ENCODE measurements at regions of chr5 and their contacts with region 1.

Region 1: GRCh38 chr5:110738812-110739651 is at the start of gene SLC25A46:
- DNase-seq: peak; percentile 41
- H3K4me3 ChIP-seq: peak within 1 kb of the TSS; percentile 82
- H3K27ac ChIP-seq: peak within 1 kb of the TSS; percentile 77
- H3K27me3 ChIP-seq: no peaks in the 10 kb centered on the region
- CTCF ChIP-seq: no peak
- polyA plus RNA-seq, gene SLC25A46: 45.2 and 60.3 TPM in 2 replicates

Region 2: GRCh38 chr5:110561510-110561909 is 177.5 kb before region 1 on chr5:
- CTCF ChIA-PET with region 1: no interaction called
- POLR2A ChIA-PET with region 1: no interaction called
- DNase-seq: no peak
- H3K4me3 ChIP-seq: no peak overlapping the region
- H3K27ac ChIP-seq: no peak overlapping the region
- H3K27me3 ChIP-seq: no peaks in the 10 kb centered on the region
- CTCF ChIP-seq: no peak

Region 3: DNA sequence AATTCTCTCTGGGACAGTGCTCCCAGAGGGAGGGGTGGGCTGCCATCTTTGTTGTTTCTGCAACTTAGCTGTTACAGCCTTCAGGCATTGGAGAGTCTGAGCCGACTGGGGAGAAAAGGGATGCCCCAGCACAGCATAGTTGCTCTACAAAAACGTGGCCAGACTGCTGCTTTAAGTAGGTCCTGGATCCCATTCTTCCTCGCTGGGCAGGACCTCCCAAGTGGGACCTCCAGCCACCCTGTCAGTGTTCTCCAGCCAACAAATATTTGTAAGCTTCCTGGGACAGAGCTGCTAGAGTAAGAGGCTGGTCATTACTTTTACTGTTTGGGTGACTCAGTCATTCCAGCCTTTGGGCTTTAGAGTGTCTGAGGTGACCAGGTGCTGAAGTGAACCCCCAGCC is 1310.7 kb after region 1 on chr5:
- CTCF ChIA-PET with region 1: no interaction called
- POLR2A ChIA-PET with region 1: interaction called, 10 read pairs
- DNase-seq: no peak
- H3K4me3 ChIP-seq: no peak overlapping the region
- H3K27ac ChIP-seq: no peak overlapping the region
- H3K27me3 ChIP-seq: no peaks in the 10 kb centered on the region
- CTCF ChIP-seq: no peak

Measured in AG04450 (cell line).